Aorta (tissue), 5 donors: ENCODE measurements at regions of chr12 and their contacts with region 1.

Region 1: GRCh38 chr12:62466594-62467491 is at the start of gene MON2:
- DNase-seq: peak; percentile 94 to 96
- ATAC-seq: peak; percentile 100
- H3K4me3 ChIP-seq: peak within 1 kb of the TSS; percentile 88 to 93
- H3K27ac ChIP-seq: peak within 1 kb of the TSS; percentile 66 to 67
- H3K4me1 ChIP-seq: peaks cover 2 to 5% of the 10 kb centered on the region in 2 donors
- H3K27me3 ChIP-seq: no peaks in the 10 kb centered on the region
- total RNA-seq, gene MON2: 98.1 to 106 TPM

Region 2: GRCh38 chr12:62227091-62227490 is 239.8 kb before region 1 on chr12:
- intact Hi-C with region 1: no loop called
- DNase-seq: no peak
- ATAC-seq: no peak
- H3K4me3 ChIP-seq: no peak overlapping the region
- H3K27ac ChIP-seq: no peak overlapping the region
- H3K4me1 ChIP-seq: no peaks in the 10 kb centered on the region
- H3K27me3 ChIP-seq: no peaks in the 10 kb centered on the region

Region 3: DNA sequence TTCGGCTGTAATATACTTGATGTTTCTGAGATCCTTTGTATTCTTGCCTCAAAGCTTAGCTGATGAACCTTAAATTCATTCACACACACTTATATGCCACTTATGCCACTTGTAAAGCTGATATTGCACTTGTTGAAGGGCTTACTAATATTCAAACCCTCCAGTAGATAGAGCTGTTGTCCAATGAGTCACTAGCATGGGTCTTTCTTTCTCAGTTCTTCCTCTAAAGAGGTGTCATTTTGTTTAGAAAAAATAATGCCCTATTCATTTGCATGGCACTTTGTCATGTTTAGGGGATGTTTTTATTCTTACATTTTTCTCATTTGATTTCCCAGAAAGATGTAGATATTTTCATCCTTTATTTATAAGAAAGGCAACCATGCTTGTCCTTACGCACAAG is 56.1 kb after region 1 on chr12:
- intact Hi-C with region 1: no loop called
- DNase-seq: no peak
- ATAC-seq: no peak
- H3K4me3 ChIP-seq: no peak overlapping the region
- H3K27ac ChIP-seq: no peak overlapping the region
- H3K4me1 ChIP-seq: peaks cover 0 to 2% of the 10 kb centered on the region in 2 donors
- H3K27me3 ChIP-seq: no peaks in the 10 kb centered on the region

Region 4: GRCh38 chr12:62603061-62603810 is 136.4 kb after region 1 on chr12:
- intact Hi-C with region 1: loop called in 1 of 2 experiments (anchors 5 kb)
- DNase-seq: peak; percentile 93 to 95
- ATAC-seq: peak; percentile 97
- H3K4me3 ChIP-seq: peak overlapping the region; percentile 48 to 94
- H3K27ac ChIP-seq: peak overlapping the region; percentile 72 to 100
- H3K4me1 ChIP-seq: no peaks in the 10 kb centered on the region
- H3K27me3 ChIP-seq: no peaks in the 10 kb centered on the region